CD8-positive, alpha-beta T cell (primary cell): ENCODE measurements at regions of chr1 and their contacts with region 1.

Region 1: GRCh38 chr1:89524369-89525168 is at the start of gene LRRC8B:
- DNase-seq: peak; percentile 73 to 94 (median 86)
- ATAC-seq: peak; percentile 80
- H3K4me3 ChIP-seq: peak within 1 kb of the TSS; percentile 92 to 98
- H3K4me3 Mint-ChIP-seq: no peak within 1 kb of the TSS
- H3K27ac ChIP-seq: peak within 1 kb of the TSS; percentile 81 to 91
- H3K27ac Mint-ChIP-seq: peak within 1 kb of the TSS; percentile 90
- H3K4me1 ChIP-seq: peaks cover 38% of the 10 kb centered on the region
- H3K4me1 Mint-ChIP-seq: peaks cover 25% of the 10 kb centered on the region
- H3K27me3 ChIP-seq: no peaks in the 10 kb centered on the region
- H3K27me3 Mint-ChIP-seq: no peaks in the 10 kb centered on the region
- CTCF ChIP-seq: no peak
- total RNA-seq, gene LRRC8B: 11.8 to 14.5 TPM

Region 2: DNA sequence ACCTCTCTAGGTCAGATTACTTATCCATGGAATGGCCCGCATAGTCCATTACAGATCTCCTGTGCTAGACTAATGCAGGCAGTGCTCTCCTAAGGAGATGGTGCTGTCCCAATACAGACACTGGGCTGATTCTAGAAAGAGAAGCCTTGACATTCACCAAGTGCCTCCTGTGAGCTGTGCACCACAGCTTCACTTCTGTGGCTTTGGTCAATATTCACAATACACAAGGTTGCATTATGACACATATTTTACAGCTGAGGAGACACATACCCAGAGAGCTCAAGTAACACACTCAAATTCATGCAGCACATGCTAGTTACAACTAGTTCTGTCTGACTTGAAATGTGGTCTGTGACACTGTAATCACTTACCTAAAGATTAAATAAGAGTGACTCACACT is 59.4 kb before region 1 on chr1:
- CTCF ChIA-PET with region 1: no interaction called
- POLR2A ChIA-PET with region 1: no interaction called
- intact Hi-C with region 1: no loop called
- DNase-seq: no peak
- ATAC-seq: peak; percentile 67
- H3K4me3 ChIP-seq: no peak overlapping the region
- H3K4me3 Mint-ChIP-seq: no peak overlapping the region
- H3K27ac ChIP-seq: no peak overlapping the region
- H3K27ac Mint-ChIP-seq: no peak overlapping the region
- H3K4me1 ChIP-seq: peaks cover 10% of the 10 kb centered on the region
- H3K4me1 Mint-ChIP-seq: peaks cover 17% of the 10 kb centered on the region
- H3K27me3 ChIP-seq: no peaks in the 10 kb centered on the region
- H3K27me3 Mint-ChIP-seq: peaks cover 40% of the 10 kb centered on the region
- CTCF ChIP-seq: no peak

Region 3: GRCh38 chr1:89598450-89599331 is 74.1 kb after region 1 on chr1:
- CTCF ChIA-PET with region 1: interaction called, 7 read pairs
- POLR2A ChIA-PET with region 1: interaction called, 3 read pairs
- intact Hi-C with region 1: loop called (anchors 1 to 2 kb)
- DNase-seq: peak in 2 of 9 experiments; percentile 55 to 67
- ATAC-seq: peak; percentile 64
- H3K4me3 ChIP-seq: no peak overlapping the region
- H3K4me3 Mint-ChIP-seq: no peak overlapping the region
- H3K27ac ChIP-seq: no peak overlapping the region
- H3K27ac Mint-ChIP-seq: peak overlapping the region; percentile 66
- H3K4me1 ChIP-seq: peaks cover 49% of the 10 kb centered on the region
- H3K4me1 Mint-ChIP-seq: peaks cover 83% of the 10 kb centered on the region
- H3K27me3 ChIP-seq: no peaks in the 10 kb centered on the region
- H3K27me3 Mint-ChIP-seq: no peaks in the 10 kb centered on the region
- CTCF ChIP-seq: peak; percentile 70

Region 4: GRCh38 chr1:89615676-89616598 is 91.4 kb after region 1 on chr1:
- CTCF ChIA-PET with region 1: interaction called, 3 read pairs
- POLR2A ChIA-PET with region 1: interaction called, 21 read pairs
- intact Hi-C with region 1: loop called in 1 of 2 experiments (anchors 5 kb)
- DNase-seq: peak in 3 of 9 experiments; percentile 27 to 59 (median 49)
- ATAC-seq: no peak
- H3K4me3 ChIP-seq: no peak overlapping the region
- H3K4me3 Mint-ChIP-seq: no peak overlapping the region
- H3K27ac ChIP-seq: no peak overlapping the region
- H3K27ac Mint-ChIP-seq: no peak overlapping the region
- H3K4me1 ChIP-seq: peaks cover 43% of the 10 kb centered on the region
- H3K4me1 Mint-ChIP-seq: peaks cover 73% of the 10 kb centered on the region
- H3K27me3 ChIP-seq: no peaks in the 10 kb centered on the region
- H3K27me3 Mint-ChIP-seq: no peaks in the 10 kb centered on the region
- CTCF ChIP-seq: no peak

Region 5: DNA sequence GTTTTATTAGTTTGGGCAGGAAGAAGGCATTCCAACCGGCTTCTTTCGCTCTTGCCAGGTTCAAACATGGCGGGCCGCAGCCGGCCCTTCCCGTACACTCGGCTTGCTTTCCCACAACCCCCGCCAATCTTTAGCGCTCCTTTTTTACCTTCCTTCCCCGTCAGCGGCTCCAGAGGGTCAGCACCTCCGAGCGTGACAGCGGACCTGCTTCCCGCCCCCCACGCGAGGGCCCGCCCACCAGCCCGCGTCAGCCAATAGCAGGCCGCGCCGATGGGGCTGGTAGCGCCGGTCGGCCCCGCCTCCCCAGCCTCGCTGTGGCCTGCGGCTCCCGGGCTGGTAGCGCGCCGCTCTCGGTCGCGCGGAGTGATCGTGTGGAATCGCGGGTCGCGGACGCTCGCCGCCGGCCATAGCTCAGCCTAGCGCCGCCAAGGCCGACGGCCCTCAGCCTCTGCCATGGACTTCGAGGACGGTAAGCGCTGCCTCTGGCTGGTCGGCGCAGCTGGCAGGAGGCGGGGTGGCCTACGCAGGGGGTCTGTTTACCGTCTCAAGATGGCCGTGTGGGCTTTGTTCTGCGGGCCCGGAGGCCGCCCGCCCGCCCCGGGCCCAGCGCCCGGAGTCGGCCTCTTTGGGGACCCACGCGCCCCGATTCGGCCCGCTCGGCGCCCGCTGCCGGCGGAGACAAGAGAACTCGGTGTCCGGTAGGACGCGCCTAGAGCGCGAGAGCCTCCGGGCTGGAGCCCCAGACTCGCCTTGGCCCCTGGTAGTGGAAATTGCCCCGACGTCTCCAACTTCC is 470.4 kb after region 1 on chr1 and contains the start of gene ZNF326:
- CTCF ChIA-PET with region 1: no interaction called
- POLR2A ChIA-PET with region 1: no interaction called
- intact Hi-C with region 1: loop called (anchors 2 to 5 kb)
- DNase-seq: peak; percentile 89 to 96 (median 93)
- ATAC-seq: peak; percentile 97
- H3K4me3 ChIP-seq: peak within 1 kb of the TSS; percentile 72 to 93
- H3K4me3 Mint-ChIP-seq: peak within 1 kb of the TSS; percentile 99
- H3K27ac ChIP-seq: peak within 1 kb of the TSS; percentile 78 to 82
- H3K27ac Mint-ChIP-seq: peak within 1 kb of the TSS; percentile 96
- H3K4me1 ChIP-seq: peaks cover 25% of the 10 kb centered on the region
- H3K4me1 Mint-ChIP-seq: peaks cover 35% of the 10 kb centered on the region
- H3K27me3 ChIP-seq: no peaks in the 10 kb centered on the region
- H3K27me3 Mint-ChIP-seq: no peaks in the 10 kb centered on the region
- CTCF ChIP-seq: no peak
- total RNA-seq, gene ZNF326: 55.5 to 59.1 TPM